Aorta (tissue), 5 donors: ENCODE measurements at regions of chr10 and their contacts with region 1.

Region 1: GRCh38 chr10:75401569-75402485 is at the start of gene ZNF503:
- DNase-seq: peak; percentile 98 to 99
- ATAC-seq: peak; percentile 91
- H3K4me3 ChIP-seq: peak within 1 kb of the TSS; percentile 75 to 81
- H3K27ac ChIP-seq: peak within 1 kb of the TSS; percentile 70 to 87
- H3K4me1 ChIP-seq: no peaks in the 10 kb centered on the region
- H3K27me3 ChIP-seq: no peaks in the 10 kb centered on the region
- total RNA-seq, gene ZNF503: 15.7 to 32.1 TPM

Region 2: GRCh38 chr10:75294866-75295701 is 106.7 kb before region 1 on chr10:
- intact Hi-C with region 1: loop called (anchors 5 kb)
- DNase-seq: peak; percentile 89 to 93
- ATAC-seq: peak; percentile 91
- H3K4me3 ChIP-seq: peak overlapping the region; percentile 20 to 42
- H3K27ac ChIP-seq: peak overlapping the region; percentile 84 to 85
- H3K4me1 ChIP-seq: peaks cover 0 to 4% of the 10 kb centered on the region in 2 donors
- H3K27me3 ChIP-seq: no peaks in the 10 kb centered on the region

Region 3: DNA sequence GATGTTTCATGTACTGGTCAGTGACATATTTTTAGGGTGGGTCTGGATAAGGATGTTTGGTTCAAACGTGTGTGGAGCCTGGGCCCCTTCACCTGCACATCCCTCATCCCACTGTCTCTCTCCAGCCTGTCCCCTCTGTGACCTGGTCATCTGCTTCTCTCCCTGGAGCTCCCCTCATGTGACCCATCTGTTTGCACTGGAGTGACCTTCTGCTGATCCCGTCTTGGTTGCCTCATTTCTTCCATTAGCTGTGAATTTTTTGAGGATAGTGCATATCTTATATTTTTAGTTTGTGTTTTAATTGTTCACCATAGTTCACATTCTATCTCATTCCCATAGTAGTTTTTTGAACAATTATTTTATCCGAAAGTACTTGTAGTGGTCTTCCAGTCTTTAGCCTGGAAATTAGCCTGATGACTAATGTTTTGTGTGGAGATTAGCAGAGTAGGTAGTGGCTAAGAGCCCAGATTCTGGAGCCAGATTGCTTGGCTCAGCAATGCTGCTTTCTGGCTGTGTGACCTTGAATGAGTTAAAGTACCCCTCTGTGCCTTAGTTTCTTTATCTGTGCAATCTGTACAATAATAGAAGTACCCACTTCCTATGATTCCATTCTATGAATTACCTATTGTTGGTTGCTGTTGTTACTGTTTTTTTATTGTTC is 254.1 kb after region 1 on chr10:
- intact Hi-C with region 1: loop called (anchors 5 kb)
- DNase-seq: peak in 1 of 2 donors; percentile 54
- ATAC-seq: peak; percentile 75
- H3K4me3 ChIP-seq: no peak overlapping the region
- H3K27ac ChIP-seq: peak overlapping the region in 1 of 2 donors; percentile 75
- H3K4me1 ChIP-seq: peaks cover 0 to 7% of the 10 kb centered on the region in 2 donors
- H3K27me3 ChIP-seq: no peaks in the 10 kb centered on the region

Region 4: GRCh38 chr10:75904499-75905283 is 502.9 kb after region 1 on chr10:
- intact Hi-C with region 1: loop called in 1 of 2 experiments (anchors 5 kb)
- DNase-seq: no peak
- ATAC-seq: no peak
- H3K4me3 ChIP-seq: no peak overlapping the region
- H3K27ac ChIP-seq: no peak overlapping the region
- H3K4me1 ChIP-seq: no peaks in the 10 kb centered on the region
- H3K27me3 ChIP-seq: no peaks in the 10 kb centered on the region

Region 5: DNA sequence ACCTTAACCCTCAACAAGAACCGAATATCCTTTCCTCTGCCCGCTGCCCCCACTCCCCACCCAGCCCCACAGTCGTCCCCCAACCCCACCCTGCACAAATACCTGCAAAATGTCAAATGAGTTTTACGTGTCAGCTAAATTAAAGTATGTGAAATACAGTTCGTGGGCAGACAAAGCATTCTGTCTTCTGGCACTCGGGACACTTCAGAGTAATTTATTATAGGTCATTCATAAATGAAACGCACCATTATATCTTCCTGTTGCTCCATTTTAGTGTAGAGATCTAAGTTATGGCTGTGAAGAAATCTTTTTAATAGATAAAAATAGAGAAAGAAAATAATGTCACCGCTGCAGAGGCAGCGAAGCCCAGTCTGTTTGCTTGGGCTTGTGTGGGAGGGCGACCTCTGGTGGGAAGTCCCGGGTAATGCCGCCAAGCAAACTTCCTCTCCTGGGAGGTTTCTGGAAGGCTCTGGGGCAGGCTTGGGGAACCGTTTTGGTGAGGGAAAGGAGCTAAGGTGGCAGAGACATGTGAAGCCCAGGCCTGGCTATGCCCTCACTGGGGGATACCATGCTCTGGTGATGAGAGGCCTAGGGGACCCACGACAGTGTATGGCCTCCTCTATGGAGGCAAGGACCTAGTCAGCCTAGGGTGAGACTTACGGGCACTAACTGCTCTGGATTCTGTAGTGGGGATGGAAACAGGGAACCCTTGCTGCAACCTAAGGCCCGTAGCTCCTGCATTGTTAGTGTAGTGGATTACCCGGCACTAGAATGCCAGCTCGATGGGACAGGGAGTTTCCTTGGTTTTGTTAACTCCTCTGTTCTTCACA is 634.5 kb after region 1 on chr10:
- intact Hi-C with region 1: loop called (anchors 1 to 5 kb)
- DNase-seq: peak; percentile 83 to 91
- ATAC-seq: peak; percentile 90
- H3K4me3 ChIP-seq: peak overlapping the region in 1 of 2 donors; percentile 48
- H3K27ac ChIP-seq: no peak overlapping the region
- H3K4me1 ChIP-seq: no peaks in the 10 kb centered on the region
- H3K27me3 ChIP-seq: no peaks in the 10 kb centered on the region

Region 6: DNA sequence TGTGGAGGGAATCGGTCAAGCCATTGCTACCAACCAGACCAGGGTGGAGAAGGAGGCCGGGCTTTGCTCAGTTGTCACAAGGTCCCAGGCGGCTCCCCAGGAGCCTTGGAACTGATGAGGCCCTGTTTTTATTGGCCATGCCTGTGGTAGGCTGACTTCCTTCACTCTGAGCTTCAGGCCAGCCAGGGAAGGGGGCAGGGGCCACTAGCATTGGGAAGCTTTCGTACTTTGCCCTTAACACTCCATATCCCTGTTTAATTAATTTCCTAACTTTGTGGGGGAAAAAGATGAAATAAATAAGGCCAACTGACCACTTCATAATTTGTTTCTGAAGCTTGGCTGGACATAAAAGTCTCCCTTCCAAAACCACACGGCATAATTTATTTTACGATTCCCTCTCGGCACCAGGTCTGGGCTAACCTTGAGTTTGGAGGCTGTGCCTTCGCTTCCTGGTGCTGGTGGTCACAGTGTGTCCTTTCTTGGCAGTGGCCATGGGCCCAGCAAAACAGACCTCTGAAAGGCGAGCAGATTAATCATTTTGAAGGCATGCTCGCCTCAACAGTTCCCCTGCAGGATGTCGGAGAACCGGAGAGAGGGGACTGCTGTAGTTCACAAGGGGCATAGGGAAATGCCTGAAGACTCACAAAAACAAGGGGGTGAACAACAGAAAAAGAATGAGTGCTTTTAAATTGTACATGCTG is 995.5 kb after region 1 on chr10:
- intact Hi-C with region 1: loop called in 1 of 2 experiments (anchors 5 kb)
- DNase-seq: peak; percentile 86 to 87
- ATAC-seq: peak; percentile 89
- H3K4me3 ChIP-seq: no peak overlapping the region
- H3K27ac ChIP-seq: peak overlapping the region; percentile 92 to 99
- H3K4me1 ChIP-seq: peaks cover 13 to 37% of the 10 kb centered on the region in 2 donors
- H3K27me3 ChIP-seq: no peaks in the 10 kb centered on the region

Region 7: GRCh38 chr10:76984559-76985443 is 1583.0 kb after region 1 on chr10:
- intact Hi-C with region 1: loop called in 1 of 2 experiments (anchors 10 kb)
- DNase-seq: peak; percentile 71 to 86
- ATAC-seq: peak; percentile 80
- H3K4me3 ChIP-seq: no peak overlapping the region
- H3K27ac ChIP-seq: no peak overlapping the region
- H3K4me1 ChIP-seq: no peaks in the 10 kb centered on the region
- H3K27me3 ChIP-seq: no peaks in the 10 kb centered on the region